HEK293 (cell line): ENCODE measurements at regions of chr1 and their contacts with region 1.

Region 1: DNA sequence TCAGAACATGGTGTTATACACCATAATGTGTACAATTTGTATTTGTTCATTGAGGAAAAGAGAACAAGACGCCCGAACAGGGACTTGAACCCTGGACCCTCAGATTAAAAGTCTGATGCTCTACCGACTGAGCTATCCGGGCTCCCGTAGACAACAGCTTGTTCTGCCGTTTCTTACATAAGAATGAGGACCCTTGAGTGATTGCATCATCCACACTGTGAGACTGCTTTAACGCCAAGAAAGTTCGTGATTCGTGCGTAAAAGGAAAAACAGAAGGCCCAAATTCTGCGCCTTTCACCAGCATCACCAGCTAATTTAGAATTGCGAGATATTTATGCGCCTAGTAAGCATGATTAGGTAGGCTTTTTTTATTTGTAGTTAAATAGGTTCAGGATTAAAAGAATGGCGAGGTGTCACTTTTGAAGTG is 9.2 kb upstream of the MDM4 start:
- H3K4me3 ChIP-seq: peak overlapping the region; percentile 58
- H3K27ac ChIP-seq: peak overlapping the region; percentile 78
- H3K4me1 ChIP-seq: no peaks in the 10 kb centered on the region
- CTCF ChIP-seq: no peak

Region 2: GRCh38 chr1:204162231-204163074 is 344.5 kb before region 1 on chr1:
- CTCF ChIA-PET with region 1: interaction called, 16 read pairs
- POLR2A ChIA-PET with region 1: no interaction called
- H3K4me3 ChIP-seq: no peak overlapping the region
- H3K27ac ChIP-seq: no peak overlapping the region
- H3K4me1 ChIP-seq: no peaks in the 10 kb centered on the region
- CTCF ChIP-seq: peak; percentile 95

Region 3: DNA sequence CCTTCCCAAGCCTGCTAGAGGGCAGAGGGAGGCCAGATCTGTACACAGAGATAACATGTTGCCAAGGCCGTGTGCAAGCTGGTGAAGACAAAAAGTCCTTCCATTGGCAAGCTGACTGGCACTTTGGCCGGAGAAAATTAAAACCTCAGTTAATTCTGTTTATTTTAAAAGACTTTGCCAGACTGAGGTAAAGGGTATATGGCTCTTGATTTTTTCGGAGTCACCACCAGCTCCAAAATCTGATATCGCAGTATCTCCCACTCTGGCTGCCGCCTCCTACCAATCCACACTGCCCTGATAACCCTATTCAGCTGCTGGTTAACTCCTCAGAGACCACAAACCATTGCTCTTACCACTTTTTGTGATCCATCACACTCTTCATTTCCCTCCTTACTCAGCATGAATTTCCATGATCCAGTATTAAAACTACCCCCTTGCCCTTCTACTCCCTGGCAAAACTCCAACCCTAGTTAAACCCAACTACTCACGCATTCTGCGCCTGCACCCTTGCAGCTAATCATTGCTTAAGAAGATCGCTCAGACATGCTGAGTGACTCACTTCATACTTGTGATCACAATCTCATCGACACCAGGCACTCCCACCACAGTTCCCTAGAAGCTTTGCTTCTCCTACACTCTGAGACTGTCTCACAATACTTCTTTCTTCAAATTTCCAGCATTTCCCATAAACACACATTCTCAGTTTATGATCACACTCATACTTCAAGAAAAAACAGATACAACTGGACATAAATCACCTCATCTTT is 89.6 kb before region 1 on chr1:
- CTCF ChIA-PET with region 1: interaction called, 11 read pairs
- POLR2A ChIA-PET with region 1: interaction called, 5 read pairs
- H3K4me3 ChIP-seq: peak overlapping the region; percentile 8; the same call in 1 of the 2 replicates
- H3K27ac ChIP-seq: peak overlapping the region; percentile 60
- H3K4me1 ChIP-seq: peaks cover 16% of the 10 kb centered on the region; the same call in 1 of the 2 replicates
- CTCF ChIP-seq: no peak

Region 4: DNA sequence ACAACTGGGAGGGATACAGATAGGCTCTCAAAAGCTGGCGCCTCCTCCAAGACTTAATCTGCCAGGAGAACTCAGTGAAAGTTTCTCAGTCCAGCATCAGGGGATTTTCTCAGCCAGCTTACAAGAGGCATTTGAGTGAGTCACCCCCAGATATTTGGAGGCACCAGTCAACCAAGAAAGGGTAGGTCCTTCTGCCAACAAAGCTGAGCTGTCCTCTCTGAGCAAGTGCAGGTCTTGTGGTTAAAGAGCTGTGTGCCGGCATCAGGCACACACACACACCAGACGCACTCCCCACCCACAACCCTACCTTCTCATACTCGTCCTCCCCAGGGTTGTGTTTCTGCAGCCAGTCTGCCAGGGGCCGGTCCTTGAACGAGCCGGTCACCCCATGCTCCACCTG is 68.3 kb before region 1 on chr1:
- CTCF ChIA-PET with region 1: interaction called, 314 read pairs
- POLR2A ChIA-PET with region 1: interaction called, 4 read pairs
- H3K4me3 ChIP-seq: no peak overlapping the region
- H3K27ac ChIP-seq: no peak overlapping the region
- H3K4me1 ChIP-seq: no peaks in the 10 kb centered on the region
- CTCF ChIP-seq: no peak

Region 5: DNA sequence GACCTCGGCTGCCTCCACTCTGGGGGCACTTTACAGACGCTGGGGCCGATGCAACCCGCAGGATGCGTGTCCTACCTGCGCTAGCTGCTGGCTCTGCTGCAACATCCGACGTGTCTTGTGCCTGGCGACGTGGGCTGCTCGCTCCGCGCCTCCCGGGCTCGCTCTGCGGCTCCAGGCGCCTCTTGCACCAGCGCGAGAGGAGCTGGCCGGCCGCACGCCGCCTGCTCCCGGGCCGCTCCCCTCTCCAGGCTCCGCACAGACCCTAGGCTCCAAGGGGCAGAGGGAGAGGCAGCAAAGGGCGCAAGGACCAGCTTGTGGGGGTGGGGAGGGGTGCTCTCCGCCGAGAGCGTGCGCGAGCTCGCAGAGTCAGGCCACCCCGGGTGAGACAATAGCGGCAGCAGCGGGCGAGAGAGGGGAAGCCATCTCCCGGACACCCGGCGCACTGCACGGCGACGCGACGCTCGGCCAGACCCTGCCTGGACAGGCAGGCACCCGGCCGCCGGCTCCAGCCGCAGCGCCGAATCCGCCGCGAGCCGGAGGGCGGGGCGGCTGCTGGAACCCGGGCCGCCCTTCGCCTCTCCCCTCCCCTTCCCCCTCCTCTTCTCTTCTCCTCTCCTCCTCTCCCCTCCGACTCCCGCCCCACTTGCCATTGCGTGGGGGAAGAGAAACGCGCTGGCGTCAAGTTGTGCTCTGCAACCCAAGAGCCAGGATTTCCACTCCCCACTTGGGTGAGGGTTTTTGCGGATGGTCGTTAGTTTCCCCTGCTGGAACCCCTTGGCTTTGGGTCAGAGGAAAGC is 12.5 kb before region 1 on chr1 and contains the start of gene PIK3C2B:
- CTCF ChIA-PET with region 1: interaction called, 42 read pairs
- POLR2A ChIA-PET with region 1: interaction called, 15 read pairs
- H3K4me3 ChIP-seq: peak within 1 kb of the TSS; percentile 80
- H3K27ac ChIP-seq: peak within 1 kb of the TSS; percentile 90
- H3K4me1 ChIP-seq: peaks cover 5% of the 10 kb centered on the region
- CTCF ChIP-seq: peak; percentile 80; the same call in 1 of the 2 replicates